ENCODE measurements at regions of chr1 and their contacts with region 1.

Region 1: GRCh38 chr1:23098463-23099170 is 70.0 kb downstream of the LUZP1 start:
- DNase-seq: peak; percentile 72
- H3K4me3 Mint-ChIP-seq: no peak overlapping the region
- H3K27ac Mint-ChIP-seq: no peak overlapping the region
- H3K4me1 Mint-ChIP-seq: peaks cover 46% of the 10 kb centered on the region
- H3K27me3 Mint-ChIP-seq: no peaks in the 10 kb centered on the region

Region 2: GRCh38 chr1:22976461-22977243 is 122.0 kb before region 1 on chr1:
- CTCF ChIA-PET with region 1: no interaction called
- POLR2A ChIA-PET with region 1: no interaction called
- intact Hi-C with region 1: loop called (anchors 1 kb)
- DNase-seq: peak; percentile 69
- H3K4me3 Mint-ChIP-seq: no peak overlapping the region
- H3K27ac Mint-ChIP-seq: no peak overlapping the region
- H3K4me1 Mint-ChIP-seq: no peaks in the 10 kb centered on the region
- H3K27me3 Mint-ChIP-seq: peaks cover 23% of the 10 kb centered on the region

Region 3: GRCh38 chr1:23108918-23109533 is 10.4 kb after region 1 on chr1:
- CTCF ChIA-PET with region 1: interaction called, 51 read pairs
- POLR2A ChIA-PET with region 1: interaction called, 11 read pairs
- intact Hi-C with region 1: loop called (anchors 1 kb)
- DNase-seq: peak; percentile 66
- H3K4me3 Mint-ChIP-seq: no peak overlapping the region
- H3K27ac Mint-ChIP-seq: peak overlapping the region; percentile 77
- H3K4me1 Mint-ChIP-seq: peaks cover 67% of the 10 kb centered on the region
- H3K27me3 Mint-ChIP-seq: no peaks in the 10 kb centered on the region

Region 4: DNA sequence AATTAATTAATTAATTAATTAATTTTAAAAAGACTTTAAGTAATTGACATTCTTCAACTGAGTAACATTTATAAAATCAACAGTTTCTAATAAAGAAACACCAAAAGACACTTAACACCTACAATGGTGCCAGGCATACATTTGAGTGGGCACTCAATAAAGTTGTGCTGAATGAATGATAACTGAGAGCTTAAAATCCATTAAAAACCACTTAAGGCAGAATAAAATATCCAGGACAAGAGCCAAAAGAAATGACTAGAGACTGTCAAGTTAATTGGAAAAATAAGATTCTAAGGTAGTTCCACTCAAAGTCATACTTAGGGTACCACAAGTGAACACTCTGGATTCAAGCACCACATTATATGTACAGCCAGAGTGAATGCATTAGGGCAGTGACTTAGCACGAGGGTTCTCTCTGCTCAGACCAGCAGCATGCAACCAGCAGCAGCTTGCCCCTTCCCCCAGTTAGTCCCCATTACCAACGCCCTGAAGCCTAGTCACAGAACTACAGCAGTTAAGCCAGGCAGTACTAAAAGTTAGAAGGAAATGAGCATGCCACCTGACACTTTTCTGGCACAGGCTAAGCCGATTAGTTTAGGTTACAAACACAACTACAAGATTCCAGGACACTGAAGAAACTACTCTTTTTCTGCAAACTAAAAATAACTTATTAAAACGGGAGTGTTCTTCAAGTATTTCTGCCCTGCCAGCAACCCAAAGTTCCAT is 23.6 kb after region 1 on chr1:
- CTCF ChIA-PET with region 1: interaction called, 28 read pairs
- POLR2A ChIA-PET with region 1: interaction called, 6 read pairs
- intact Hi-C with region 1: loop called (anchors 1 kb)
- DNase-seq: no peak
- H3K4me3 Mint-ChIP-seq: no peak overlapping the region
- H3K27ac Mint-ChIP-seq: peak overlapping the region; percentile 18
- H3K4me1 Mint-ChIP-seq: peaks cover 67% of the 10 kb centered on the region
- H3K27me3 Mint-ChIP-seq: no peaks in the 10 kb centered on the region

Region 5: GRCh38 chr1:23168457-23169194 is 70.0 kb after region 1 on chr1 and contains the start of gene LUZP1:
- CTCF ChIA-PET with region 1: interaction called, 14 read pairs
- POLR2A ChIA-PET with region 1: interaction called, 7 read pairs
- intact Hi-C with region 1: loop called (anchors 2 kb)
- DNase-seq: peak; percentile 91
- H3K4me3 Mint-ChIP-seq: peak within 1 kb of the TSS; percentile 96
- H3K27ac Mint-ChIP-seq: peak within 1 kb of the TSS; percentile 85
- H3K4me1 Mint-ChIP-seq: peaks cover 26% of the 10 kb centered on the region
- H3K27me3 Mint-ChIP-seq: no peaks in the 10 kb centered on the region
- total RNA-seq, gene LUZP1: 19.0 to 21.2 TPM

Region 6: GRCh38 chr1:23539698-23540266 is 441.2 kb after region 1 on chr1:
- CTCF ChIA-PET with region 1: interaction called, 3 read pairs
- POLR2A ChIA-PET with region 1: no interaction called
- intact Hi-C with region 1: loop called (anchors 10 kb)
- DNase-seq: peak; percentile 96
- H3K4me3 Mint-ChIP-seq: peak overlapping the region; percentile 55
- H3K27ac Mint-ChIP-seq: peak overlapping the region; percentile 62
- H3K4me1 Mint-ChIP-seq: peaks cover 17% of the 10 kb centered on the region
- H3K27me3 Mint-ChIP-seq: no peaks in the 10 kb centered on the region

Measured in activated CD4-positive, alpha-beta memory T cell treated with anti-CD3 and anti-CD28 coated beads for 36 hours (primary cell).